Activated CD4-positive, alpha-beta T cell treated with anti-CD3 and anti-CD28 coated beads, Interleukin-2, amount 10 ng/mL, durations not matched to agents 24 days and 14 days (primary cell): ENCODE measurements at regions of chrX and their contacts with region 1.

Region 1: GRCh38 chrX:147738265-147738664 is 173.5 kb upstream of the FMR1 start:
- DNase-seq: peak; percentile 74
- H3K4me3 Mint-ChIP-seq: peak overlapping the region; percentile 57
- H3K27ac Mint-ChIP-seq: peak overlapping the region; percentile 91
- H3K4me1 Mint-ChIP-seq: peaks cover 27% of the 10 kb centered on the region
- H3K27me3 Mint-ChIP-seq: no peaks in the 10 kb centered on the region

Region 2: DNA sequence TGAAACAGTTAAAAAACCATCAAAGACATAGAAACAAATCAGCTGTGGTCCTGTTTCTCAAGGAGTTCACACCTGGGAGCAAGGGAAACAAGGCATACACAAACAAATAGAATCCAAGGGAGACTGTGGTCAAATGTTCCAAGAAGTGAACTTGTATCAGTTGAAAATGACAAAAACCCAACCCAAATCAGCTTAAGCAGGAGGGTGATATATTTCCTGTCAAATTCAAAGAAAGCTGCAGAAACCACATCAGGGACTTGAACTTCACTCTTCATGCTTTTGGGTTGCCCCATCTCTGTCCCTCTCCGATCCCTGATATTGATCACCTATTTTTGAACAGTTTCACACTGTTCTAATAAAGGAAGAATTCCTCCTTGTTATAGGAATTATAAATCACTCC is 24.9 kb after region 1 on chrX:
- intact Hi-C with region 1: loop called (anchors 1 kb)
- DNase-seq: peak; percentile 63
- H3K4me3 Mint-ChIP-seq: no peak overlapping the region
- H3K27ac Mint-ChIP-seq: no peak overlapping the region
- H3K4me1 Mint-ChIP-seq: peaks cover 11% of the 10 kb centered on the region
- H3K27me3 Mint-ChIP-seq: peaks cover 1% of the 10 kb centered on the region

Region 3: GRCh38 chrX:147779173-147779572 is 40.9 kb after region 1 on chrX:
- intact Hi-C with region 1: loop called (anchors 5 kb)
- DNase-seq: peak; percentile 54
- H3K4me3 Mint-ChIP-seq: no peak overlapping the region
- H3K27ac Mint-ChIP-seq: no peak overlapping the region
- H3K4me1 Mint-ChIP-seq: peaks cover 9% of the 10 kb centered on the region
- H3K27me3 Mint-ChIP-seq: peaks cover 2% of the 10 kb centered on the region

Region 4: DNA sequence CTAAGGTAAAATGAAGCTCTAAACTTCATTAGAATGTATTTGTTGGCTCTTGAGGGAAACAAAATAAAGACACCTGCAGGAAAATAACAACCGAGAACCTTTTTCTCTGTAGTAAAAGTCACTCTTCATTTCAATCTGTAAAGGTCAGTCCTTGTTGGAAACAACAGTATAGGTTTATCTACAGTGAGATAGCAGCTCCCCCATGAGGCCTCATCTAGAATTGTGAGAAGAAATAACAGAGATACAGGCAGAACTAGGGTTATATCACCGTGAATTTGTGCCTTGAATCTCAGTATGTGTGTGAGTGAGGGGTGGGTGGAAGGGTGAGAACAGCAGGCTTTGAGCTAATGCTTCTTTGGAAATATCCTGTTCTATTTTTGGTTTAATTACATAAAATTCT is 65.7 kb after region 1 on chrX:
- intact Hi-C with region 1: no loop called
- DNase-seq: peak; percentile 67
- H3K4me3 Mint-ChIP-seq: no peak overlapping the region
- H3K27ac Mint-ChIP-seq: no peak overlapping the region
- H3K4me1 Mint-ChIP-seq: no peaks in the 10 kb centered on the region
- H3K27me3 Mint-ChIP-seq: no peaks in the 10 kb centered on the region

Region 5: DNA sequence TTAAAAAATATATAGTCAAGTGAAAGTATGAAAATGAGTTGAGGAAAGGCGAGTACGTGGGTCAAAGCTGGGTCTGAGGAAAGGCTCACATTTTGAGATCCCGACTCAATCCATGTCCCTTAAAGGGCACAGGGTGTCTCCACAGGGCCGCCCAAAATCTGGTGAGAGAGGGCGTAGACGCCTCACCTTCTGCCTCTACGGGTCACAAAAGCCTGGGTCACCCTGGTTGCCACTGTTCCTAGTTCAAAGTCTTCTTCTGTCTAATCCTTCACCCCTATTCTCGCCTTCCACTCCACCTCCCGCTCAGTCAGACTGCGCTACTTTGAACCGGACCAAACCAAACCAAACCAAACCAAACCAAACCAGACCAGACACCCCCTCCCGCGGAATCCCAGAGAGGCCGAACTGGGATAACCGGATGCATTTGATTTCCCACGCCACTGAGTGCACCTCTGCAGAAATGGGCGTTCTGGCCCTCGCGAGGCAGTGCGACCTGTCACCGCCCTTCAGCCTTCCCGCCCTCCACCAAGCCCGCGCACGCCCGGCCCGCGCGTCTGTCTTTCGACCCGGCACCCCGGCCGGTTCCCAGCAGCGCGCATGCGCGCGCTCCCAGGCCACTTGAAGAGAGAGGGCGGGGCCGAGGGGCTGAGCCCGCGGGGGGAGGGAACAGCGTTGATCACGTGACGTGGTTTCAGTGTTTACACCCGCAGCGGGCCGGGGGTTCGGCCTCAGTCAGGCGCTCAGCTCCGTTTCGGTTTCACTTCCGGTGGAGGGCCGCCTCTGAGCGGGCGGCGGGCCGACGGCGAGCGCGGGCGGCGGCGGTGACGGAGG is 173.1 kb after region 1 on chrX and contains the start of gene FMR1:
- intact Hi-C with region 1: loop called (anchors 5 kb)
- DNase-seq: peak; percentile 98
- H3K4me3 Mint-ChIP-seq: peak within 1 kb of the TSS; percentile 88
- H3K27ac Mint-ChIP-seq: peak within 1 kb of the TSS; percentile 89
- H3K4me1 Mint-ChIP-seq: peaks cover 24% of the 10 kb centered on the region
- H3K27me3 Mint-ChIP-seq: peaks cover 1% of the 10 kb centered on the region
- total RNA-seq, gene FMR1: 36.0 and 37.3 TPM in 2 replicates